SK-N-SH (cell line): ENCODE measurements at regions of chr18 and their contacts with region 1.

Region 1: DNA sequence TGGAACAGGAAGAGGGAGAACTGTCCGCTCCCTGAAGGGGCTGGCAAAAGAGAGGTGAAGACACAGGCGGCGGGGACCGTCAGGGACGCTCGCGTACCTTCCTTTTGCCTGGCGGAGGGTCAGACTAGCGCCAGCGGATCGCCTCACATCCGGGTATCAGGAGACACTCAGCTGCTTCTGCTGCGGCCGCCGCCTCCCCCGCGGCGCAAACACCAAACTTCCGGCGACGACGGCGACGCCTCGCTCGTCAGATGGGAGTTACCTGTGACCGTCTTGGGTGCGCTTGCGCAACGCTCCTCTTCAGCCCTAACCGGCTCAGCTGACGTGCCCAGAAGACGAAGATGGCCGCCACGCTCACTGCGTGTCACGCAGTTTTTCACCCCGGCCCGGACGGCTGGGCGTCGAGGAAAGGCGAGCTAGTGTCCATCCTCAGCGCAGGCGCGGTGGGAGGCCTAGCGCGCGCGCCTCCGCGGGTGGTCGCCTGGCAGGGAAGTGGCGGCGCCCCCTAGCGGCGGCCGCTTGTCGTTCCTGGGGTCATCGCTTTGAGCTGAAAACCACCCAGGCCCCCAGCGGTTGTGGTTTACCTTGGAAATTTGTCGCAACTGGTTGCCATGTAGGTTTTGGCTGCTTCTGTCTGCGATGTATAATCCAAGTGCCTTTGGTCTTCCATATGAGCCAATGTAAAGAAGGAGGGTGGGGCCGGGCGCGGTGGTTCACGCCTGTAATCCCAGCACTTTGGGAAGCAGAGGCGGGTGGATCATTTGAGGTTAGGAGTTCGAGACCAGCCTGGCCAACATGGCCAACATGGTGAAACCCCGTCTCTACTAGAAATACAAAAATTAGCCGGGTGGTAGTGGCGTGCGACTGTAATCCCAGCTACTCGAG is at the start of gene ESCO1:
- DNase-seq: peak; percentile 95
- H3K4me3 ChIP-seq: peak within 1 kb of the TSS; percentile 89 to 93
- H3K27ac ChIP-seq: peak within 1 kb of the TSS; percentile 96
- H3K4me1 ChIP-seq: peaks cover 3 to 7% of the 10 kb centered on the region in 2 experiments; a peak in 2 of 4 replicates
- H3K27me3 ChIP-seq: no peaks in the 10 kb centered on the region
- CTCF ChIP-seq: peak; percentile 82
- EP300 ChIP-seq: no peak; a peak in 1 of 4 replicates
- RAD21 ChIP-seq: peak; percentile 55
- polyA plus RNA-seq, gene ESCO1: 2.2 and 2.7 TPM in 2 replicates

Region 2: DNA sequence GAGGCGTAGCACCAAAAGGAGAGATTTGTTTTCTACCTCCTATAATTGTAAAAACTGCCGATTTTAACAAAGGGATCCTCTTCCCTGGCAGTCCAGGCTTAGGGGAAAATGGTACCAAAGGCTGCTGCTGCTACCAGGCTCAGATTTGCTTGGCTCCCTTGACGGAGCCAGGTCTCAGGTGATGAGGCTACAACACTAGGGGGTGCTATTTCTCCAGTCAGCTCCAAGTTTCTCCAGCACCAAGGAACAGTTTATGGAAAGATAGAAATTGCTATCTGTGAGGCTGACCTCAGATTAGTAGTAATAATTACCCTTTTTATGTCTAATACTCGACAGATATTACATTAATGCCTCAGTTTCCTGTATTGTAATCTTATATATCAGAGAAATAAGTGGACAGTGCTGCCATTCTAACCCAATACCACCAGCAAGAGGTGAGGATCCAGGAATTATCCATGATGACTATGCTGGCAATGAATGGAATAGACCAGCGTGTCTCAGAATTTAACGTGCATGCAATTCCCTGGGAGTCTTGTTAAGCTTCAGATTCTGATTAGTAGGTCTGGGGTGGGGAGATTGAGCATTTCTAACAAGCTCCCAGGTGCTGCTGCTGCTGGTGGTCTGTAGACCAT is 111.5 kb before region 1 on chr18:
- CTCF ChIA-PET with region 1: interaction called, 13 read pairs
- POLR2A ChIA-PET with region 1: no interaction called
- DNase-seq: peak; percentile 71
- H3K4me3 ChIP-seq: peak overlapping the region in 1 of 2 experiments; percentile 49; a peak in 1 of 4 replicates
- H3K27ac ChIP-seq: no peak overlapping the region
- H3K4me1 ChIP-seq: peaks cover 3 to 9% of the 10 kb centered on the region in 2 experiments; a peak in 2 of 4 replicates
- H3K27me3 ChIP-seq: no peaks in the 10 kb centered on the region
- CTCF ChIP-seq: peak; percentile 73
- EP300 ChIP-seq: no peak
- RAD21 ChIP-seq: peak; percentile 83

Region 3: DNA sequence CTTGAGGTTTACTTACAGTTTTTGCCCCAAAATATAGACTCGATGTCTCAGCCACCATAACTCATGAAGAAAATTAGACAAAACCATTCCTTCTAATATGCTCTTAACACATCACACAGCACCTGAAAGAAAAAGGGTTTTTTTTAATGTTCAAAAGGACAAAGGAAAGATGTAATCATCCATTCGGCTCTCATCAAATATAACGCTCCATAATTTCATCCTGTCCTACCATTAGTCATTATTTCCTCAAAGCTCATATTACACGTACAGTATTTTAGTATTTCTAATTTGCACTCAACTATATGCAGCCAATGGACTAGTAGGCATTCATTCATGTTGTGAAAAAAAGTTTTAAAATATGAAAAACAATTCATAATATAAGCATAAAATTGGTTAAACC is 25.1 kb before region 1 on chr18:
- CTCF ChIA-PET with region 1: interaction called, 10 read pairs
- POLR2A ChIA-PET with region 1: no interaction called
- DNase-seq: no peak
- H3K4me3 ChIP-seq: no peak overlapping the region
- H3K27ac ChIP-seq: no peak overlapping the region
- H3K4me1 ChIP-seq: peaks cover 0 to 9% of the 10 kb centered on the region in 2 experiments; a peak in 1 of 4 replicates
- H3K27me3 ChIP-seq: no peaks in the 10 kb centered on the region
- CTCF ChIP-seq: no peak
- EP300 ChIP-seq: no peak
- RAD21 ChIP-seq: no peak

Region 4: DNA sequence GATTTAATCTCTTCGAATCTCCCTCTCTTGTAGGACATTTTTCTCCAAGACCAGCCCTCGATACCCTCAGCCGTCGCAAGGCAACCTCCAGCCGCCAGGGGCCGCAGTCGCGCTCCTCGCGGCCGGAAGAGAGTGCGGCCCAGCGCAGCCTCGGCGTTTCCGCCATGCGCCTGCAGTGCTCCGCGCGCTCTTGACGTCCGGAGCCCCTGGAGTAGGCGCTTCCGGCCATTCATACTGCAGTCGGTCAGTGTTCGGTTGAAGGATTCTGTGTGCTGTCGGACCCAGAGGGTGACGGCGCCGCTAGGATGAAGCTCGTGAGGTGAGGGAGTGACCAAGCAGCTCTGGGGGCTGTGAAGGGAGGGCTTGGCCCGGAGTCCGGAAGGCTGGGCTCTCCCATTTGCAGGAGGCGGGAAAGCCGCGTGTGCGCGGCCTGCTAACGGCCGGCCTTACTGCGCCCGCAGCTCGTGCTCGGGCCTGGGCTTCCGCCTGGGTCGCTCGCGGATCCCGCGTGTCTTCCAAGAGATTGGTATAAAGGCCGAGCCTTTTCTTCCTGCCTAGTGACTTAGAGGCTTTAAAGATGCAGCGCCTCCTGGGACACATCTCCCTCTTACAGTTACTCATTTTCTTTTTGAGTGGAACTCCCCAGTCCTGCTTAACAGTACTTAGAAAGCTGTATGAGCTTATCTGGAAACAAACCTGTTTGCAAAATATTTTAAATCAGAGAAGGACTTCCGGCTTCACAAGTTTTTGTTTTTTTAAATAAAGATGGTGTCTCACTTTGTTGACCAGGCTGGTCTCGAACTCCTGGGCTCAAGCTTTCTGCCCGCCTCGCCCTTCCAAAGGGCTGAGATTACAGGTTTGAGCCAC is 11.6 kb after region 1 on chr18 and contains the start of gene SNRPD1:
- CTCF ChIA-PET with region 1: interaction called, 88 read pairs
- POLR2A ChIA-PET with region 1: interaction called, 30 read pairs
- DNase-seq: peak; percentile 94
- H3K4me3 ChIP-seq: peak within 1 kb of the TSS; percentile 71 to 79
- H3K27ac ChIP-seq: peak within 1 kb of the TSS; percentile 81 to 91
- H3K4me1 ChIP-seq: peaks cover 3 to 5% of the 10 kb centered on the region in 2 experiments; a peak in 2 of 4 replicates
- H3K27me3 ChIP-seq: no peaks in the 10 kb centered on the region
- CTCF ChIP-seq: peak; percentile 92
- EP300 ChIP-seq: peak in 1 of 2 experiments; percentile 18; a peak in 1 of 4 replicates
- RAD21 ChIP-seq: no peak
- polyA plus RNA-seq, gene SNRPD1: 21.0 and 24.6 TPM in 2 replicates

Region 5: GRCh38 chr18:21740724-21741510 is 140.1 kb after region 1 on chr18 and contains the start of gene MIB1:
- CTCF ChIA-PET with region 1: interaction called, 10 read pairs
- POLR2A ChIA-PET with region 1: interaction called, 10 read pairs
- DNase-seq: peak; percentile 96
- H3K4me3 ChIP-seq: peak within 1 kb of the TSS; percentile 89 to 95
- H3K27ac ChIP-seq: peak within 1 kb of the TSS; percentile 98
- H3K4me1 ChIP-seq: peaks cover 0 to 2% of the 10 kb centered on the region in 2 experiments; a peak in 2 of 4 replicates
- H3K27me3 ChIP-seq: no peaks in the 10 kb centered on the region
- CTCF ChIP-seq: no peak
- EP300 ChIP-seq: no peak
- RAD21 ChIP-seq: no peak
- polyA plus RNA-seq, gene MIB1: 5.0 and 6.5 TPM in 2 replicates